ENCODE measurements at regions of chr7 and their contacts with region 1.

Region 1: DNA sequence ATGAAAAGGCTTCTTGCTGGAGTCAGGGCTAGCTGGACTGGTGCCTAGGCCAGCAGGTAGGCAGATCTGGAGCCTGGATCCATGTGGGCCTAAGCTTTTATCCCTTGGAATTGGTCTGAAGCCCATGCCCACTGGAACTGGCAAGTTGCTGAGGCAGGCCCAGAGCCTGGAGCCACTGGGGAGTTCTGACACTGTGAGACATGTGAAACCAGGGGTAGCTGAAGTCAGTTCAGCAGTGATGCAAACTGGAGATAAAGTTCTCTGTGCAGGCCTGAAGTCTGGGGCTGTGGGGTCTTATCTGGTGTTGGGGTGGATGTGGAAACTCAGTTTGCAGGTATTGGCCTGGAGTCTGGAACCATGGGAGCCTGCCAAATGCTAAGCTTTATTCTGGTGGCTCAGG is 9.7 kb upstream of the THSD7A start:
- DNase-seq: no peak
- ATAC-seq: no peak
- H3K4me3 ChIP-seq: no peak overlapping the region
- H3K27ac ChIP-seq: no peak overlapping the region
- H3K4me1 ChIP-seq: no peaks in the 10 kb centered on the region
- H3K27me3 ChIP-seq: peaks cover 0 to 2% (median 0%) of the 10 kb centered on the region in 3 donors
- CTCF ChIP-seq: no peak

Region 2: DNA sequence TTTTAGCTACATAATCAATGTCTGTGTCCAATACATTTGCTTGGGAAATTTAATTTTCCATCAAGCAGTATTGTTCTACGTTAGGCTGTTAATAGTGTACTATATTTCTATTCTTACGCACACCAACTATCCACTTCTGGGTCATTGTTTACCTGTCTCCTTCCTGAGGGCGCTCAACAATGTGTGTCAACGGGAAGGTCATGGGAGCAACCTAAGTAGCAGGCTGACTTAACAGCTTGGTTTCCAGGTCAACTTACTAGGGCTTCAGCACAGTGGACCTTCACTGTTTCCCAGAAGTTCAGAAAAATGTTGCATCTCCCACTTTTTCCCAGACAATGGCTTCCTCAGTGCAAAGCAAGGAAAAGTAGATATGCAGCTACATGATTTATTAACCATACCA is 23.4 kb before region 1 on chr7:
- intact Hi-C with region 1: loop called in 1 of 2 experiments (anchors 2 kb)
- DNase-seq: no peak
- ATAC-seq: no peak
- H3K4me3 ChIP-seq: no peak overlapping the region
- H3K27ac ChIP-seq: no peak overlapping the region
- H3K4me1 ChIP-seq: no peaks in the 10 kb centered on the region
- H3K27me3 ChIP-seq: no peaks in the 10 kb centered on the region
- CTCF ChIP-seq: no peak